ENCODE measurements at regions of chr11 and their contacts with region 1.

Region 1: GRCh38 chr11:46916286-46917108 is 1.9 kb downstream of the LRP4 start:
- DNase-seq: no peak
- ATAC-seq: peak; percentile 77

Region 2: DNA sequence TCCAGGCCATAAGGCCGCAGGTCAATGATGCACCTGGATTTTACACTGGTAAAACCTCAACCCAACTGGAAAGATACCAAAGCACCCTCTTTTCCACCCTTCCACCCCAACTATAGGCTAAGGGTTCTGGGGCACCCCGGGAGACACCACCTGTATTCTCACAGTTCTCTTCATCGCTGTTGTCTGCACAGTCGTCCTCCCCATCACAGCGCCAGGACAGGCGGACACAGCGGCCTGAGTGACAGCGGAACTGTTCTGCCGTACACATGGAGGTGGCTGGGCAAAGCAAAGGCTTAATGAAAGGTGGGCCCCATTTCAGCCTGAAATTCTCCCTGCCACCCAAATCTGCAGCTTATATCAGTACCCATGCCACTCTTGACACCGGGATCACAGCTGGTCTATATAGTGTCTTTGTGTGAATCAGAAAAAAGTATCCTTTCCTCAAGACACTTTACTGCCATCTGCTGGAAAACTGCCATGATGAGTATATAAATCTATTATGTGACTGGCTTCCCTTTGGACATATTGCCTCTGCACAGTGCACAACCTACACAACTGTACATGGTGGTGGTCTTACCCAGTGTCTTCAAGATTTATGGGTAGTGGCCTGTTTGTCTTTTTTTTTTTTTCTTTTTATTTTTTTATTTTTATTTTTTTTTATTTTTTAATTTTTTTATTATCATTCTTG is 19.6 kb before region 1 on chr11:
- intact Hi-C with region 1: loop called (anchors 2 kb)
- DNase-seq: no peak
- ATAC-seq: no peak

Region 3: GRCh38 chr11:47004595-47005033 is 88.1 kb after region 1 on chr11:
- intact Hi-C with region 1: loop called (anchors 2 kb)
- DNase-seq: peak; percentile 76
- ATAC-seq: peak; percentile 99

Measured in Right ventricle myocardium inferior (tissue), 1 donor.